Right lobe of liver (tissue), 6 donors: ENCODE measurements at regions of chr1 and their contacts with region 1.

Region 1: GRCh38 chr1:211654838-211655787 is 20.3 kb downstream of the NEK2 start:
- DNase-seq: peak; percentile 86 to 90 (median 88)
- ATAC-seq: peak; percentile 95 to 98 (median 97)
- H3K4me3 ChIP-seq: peak overlapping the region in 1 of 3 donors; percentile 29
- H3K27ac ChIP-seq: no peak overlapping the region
- H3K4me1 ChIP-seq: peaks cover 0 to 3% (median 0%) of the 10 kb centered on the region in 4 donors
- H3K27me3 ChIP-seq: no peaks in the 10 kb centered on the region
- CTCF ChIP-seq: peak; percentile 89 to 99 (median 93)
- POLR2A ChIP-seq: no peak

Region 2: DNA sequence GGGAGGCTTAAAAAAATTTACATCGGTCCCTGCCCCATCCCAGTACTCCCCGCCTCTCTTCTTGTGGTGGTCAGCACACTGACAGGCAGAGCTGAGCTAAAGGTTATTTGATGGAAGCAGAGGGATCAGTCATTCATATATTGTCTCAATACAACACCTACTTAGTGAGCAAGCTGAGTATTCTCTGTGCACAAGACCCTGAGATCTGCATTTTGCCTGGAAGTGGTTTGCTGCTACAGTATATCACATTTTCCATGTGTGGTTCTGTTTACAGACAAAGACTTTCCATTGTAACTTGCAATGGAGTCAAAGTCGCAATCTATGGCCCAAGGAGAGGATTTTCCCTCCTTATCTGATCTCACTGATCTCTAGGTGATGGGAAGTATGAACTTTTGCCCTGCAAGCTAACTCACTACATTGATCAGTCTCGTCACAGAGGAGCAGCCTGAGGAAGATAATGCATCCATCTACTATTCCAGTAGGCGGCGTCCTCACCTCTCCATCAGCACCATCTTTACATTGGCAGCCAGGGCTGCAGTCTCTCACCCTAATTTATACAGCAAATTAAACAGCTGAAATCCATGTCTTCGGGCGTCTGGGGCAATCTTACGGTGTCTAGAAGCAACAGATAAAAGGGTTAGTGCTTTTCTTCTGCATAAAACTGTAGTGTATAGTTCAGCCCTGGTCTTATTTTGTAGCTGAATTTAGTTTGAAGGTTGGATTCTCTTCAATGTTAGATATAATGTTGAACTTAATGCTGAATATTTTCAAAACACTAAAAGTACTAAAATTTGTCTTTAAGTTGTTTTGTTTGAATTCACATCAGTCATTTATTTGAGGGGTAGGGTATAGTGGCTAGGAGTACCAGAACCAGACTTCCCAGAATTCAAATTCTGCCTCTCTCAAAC is 331.7 kb before region 1 on chr1:
- intact Hi-C with region 1: loop called in 1 of 2 experiments (anchors 10 kb)
- DNase-seq: peak in 1 of 3 donors; percentile 56
- ATAC-seq: peak; percentile 82 to 87 (median 84)
- H3K4me3 ChIP-seq: no peak overlapping the region
- H3K27ac ChIP-seq: no peak overlapping the region
- H3K4me1 ChIP-seq: no peaks in the 10 kb centered on the region
- H3K27me3 ChIP-seq: no peaks in the 10 kb centered on the region
- CTCF ChIP-seq: peak; percentile 65 to 83 (median 78)
- POLR2A ChIP-seq: no peak

Region 3: GRCh38 chr1:211870156-211870555 is 215.0 kb after region 1 on chr1:
- intact Hi-C with region 1: no loop called
- DNase-seq: no peak
- ATAC-seq: no peak
- H3K4me3 ChIP-seq: no peak overlapping the region
- H3K27ac ChIP-seq: no peak overlapping the region
- H3K4me1 ChIP-seq: no peaks in the 10 kb centered on the region
- H3K27me3 ChIP-seq: no peaks in the 10 kb centered on the region
- CTCF ChIP-seq: no peak
- POLR2A ChIP-seq: no peak